Colonic mucosa (tissue), 4 donors: ENCODE measurements at regions of chr17 and their contacts with region 1.

Region 1: GRCh38 chr17:4420692-4421131 is 13.0 kb upstream of the SPNS3 start:
- DNase-seq: peak; percentile 68
- H3K4me3 ChIP-seq: no peak overlapping the region
- H3K27ac ChIP-seq: no peak overlapping the region
- H3K4me1 ChIP-seq: no peaks in the 10 kb centered on the region
- H3K27me3 ChIP-seq: no peaks in the 10 kb centered on the region
- CTCF ChIP-seq: peak; percentile 91

Region 2: DNA sequence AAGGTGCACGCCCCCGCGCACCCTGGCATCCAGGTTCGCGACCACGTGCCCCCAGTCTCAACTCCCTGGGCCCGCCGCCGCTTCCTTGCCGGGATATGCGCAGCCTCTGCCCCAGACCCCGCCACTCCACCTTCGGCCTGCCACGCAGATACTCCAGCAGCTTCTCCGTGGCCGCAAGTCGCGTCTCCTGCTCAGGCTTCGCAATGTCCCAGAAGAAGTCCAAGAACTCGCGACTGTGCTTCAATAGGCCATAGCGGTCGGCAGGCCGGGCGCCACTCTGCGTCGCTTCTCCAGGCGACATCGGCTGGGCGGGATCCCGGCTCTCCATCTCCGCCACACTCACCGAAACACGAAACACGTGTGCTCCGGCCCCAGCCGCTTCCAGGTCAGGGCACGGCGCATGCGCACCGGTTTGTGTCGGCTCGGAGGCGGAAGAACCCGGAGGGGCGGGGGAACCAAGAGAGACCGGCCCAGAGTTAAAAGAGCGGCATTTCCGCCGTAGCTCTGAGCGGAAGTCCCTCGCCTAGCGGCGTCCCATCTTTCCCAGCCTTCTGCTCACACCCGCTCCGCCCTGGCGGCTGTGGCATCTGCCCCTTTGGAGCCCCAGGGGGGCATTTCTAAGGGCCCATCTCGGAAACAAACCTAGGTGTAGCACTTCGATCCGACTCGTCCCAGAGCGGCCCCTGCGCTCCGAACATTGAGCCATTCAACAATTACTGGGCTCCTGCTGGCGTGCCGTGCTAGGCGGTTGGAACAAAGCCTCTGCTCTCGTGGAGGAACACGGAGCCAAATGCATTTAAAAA is 134.5 kb after region 1 on chr17 and contains the start of gene MYBBP1A:
- intact Hi-C with region 1: loop called (anchors 5 kb)
- DNase-seq: peak; percentile 98
- H3K4me3 ChIP-seq: peak within 1 kb of the TSS; percentile 75
- H3K27ac ChIP-seq: peak within 1 kb of the TSS; percentile 78
- H3K4me1 ChIP-seq: peaks cover 9% of the 10 kb centered on the region
- H3K27me3 ChIP-seq: no peaks in the 10 kb centered on the region
- CTCF ChIP-seq: no peak
- total RNA-seq, gene MYBBP1A: 21.4 to 58.7 TPM